ENCODE measurements at regions of chr15 and their contacts with region 1.

Region 1: DNA sequence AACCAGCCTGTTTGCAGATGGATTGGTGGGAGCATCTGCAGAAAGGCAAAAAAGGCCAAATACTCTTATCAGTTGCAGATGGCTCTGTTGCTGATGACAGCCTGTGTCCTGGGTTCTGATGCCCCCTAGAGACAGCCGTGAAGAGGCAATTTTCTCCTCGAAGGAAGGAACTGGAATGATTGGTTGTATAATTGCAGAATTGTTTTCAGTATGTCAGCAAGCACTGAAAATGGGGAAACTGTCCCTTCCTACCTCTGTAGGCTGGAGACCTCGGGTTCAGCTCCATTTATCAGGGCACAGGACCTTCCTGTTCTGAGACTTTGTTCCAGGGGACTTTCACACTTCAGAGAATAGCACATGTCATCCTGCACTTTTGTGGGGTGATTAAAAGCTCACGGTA is 103.0 kb downstream of the PGPEP1L start:
- DNase-seq: peak; percentile 85 to 89
- ATAC-seq: peak; percentile 77 to 79
- H3K4me3 ChIP-seq: no peak overlapping the region
- H3K27ac ChIP-seq: peak overlapping the region; percentile 94 to 97
- H3K4me1 ChIP-seq: peaks cover 85% of the 10 kb centered on the region
- CTCF ChIP-seq: peak; percentile 91
- EP300 ChIP-seq: no peak
- POLR2A ChIP-seq: no peak
- RAD21 ChIP-seq: peak; percentile 95 to 98

Region 2: GRCh38 chr15:98850961-98851573 is 53.5 kb before region 1 on chr15:
- CTCF ChIA-PET with region 1: interaction called, 26 read pairs
- POLR2A ChIA-PET with region 1: no interaction called
- DNase-seq: peak; percentile 84 to 89
- ATAC-seq: peak; percentile 65 to 76
- H3K4me3 ChIP-seq: peak overlapping the region; percentile 47; the same call in 2 of the 3 replicates
- H3K27ac ChIP-seq: peak overlapping the region; percentile 95 to 97
- H3K4me1 ChIP-seq: peaks cover 86% of the 10 kb centered on the region
- CTCF ChIP-seq: peak; percentile 88
- EP300 ChIP-seq: peak; percentile 25 to 27; a peak in 2 of 5 replicates
- POLR2A ChIP-seq: no peak
- RAD21 ChIP-seq: peak; percentile 98

Region 3: DNA sequence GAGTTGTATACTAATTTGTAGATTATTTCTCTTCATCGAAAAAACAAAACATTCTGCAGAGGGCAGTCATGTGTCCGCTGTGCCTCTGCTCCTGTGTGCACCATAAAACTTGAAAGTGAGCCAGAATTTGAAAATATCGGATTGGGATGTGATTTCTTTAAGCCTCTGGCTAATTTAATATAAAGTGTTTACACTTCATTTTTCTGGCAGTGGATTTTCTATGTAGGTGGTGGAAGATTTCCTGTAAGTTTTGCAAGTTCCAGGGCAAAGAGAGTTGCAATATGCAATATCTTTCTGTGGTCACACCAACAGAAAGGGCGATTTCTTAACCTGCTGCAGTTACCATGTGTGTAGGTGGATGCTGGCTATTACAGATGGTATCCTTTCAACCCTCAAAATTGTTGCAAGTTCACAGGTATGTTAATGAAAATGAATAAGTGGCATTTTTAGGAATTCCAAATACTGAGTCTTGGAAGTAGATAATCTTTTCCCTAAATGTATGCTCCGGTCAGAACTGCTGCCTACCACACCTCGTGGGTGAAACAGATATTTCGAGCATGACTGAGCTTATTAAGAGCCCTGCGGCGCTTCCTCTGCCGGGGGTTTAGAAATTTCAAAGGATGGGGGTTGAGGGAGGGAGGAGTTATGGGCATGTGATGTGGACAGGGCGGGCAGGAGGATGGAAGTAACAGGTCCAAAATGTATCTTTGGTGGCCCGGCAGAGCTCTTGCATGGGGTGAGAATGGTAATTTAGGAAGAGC is 30.9 kb before region 1 on chr15:
- CTCF ChIA-PET with region 1: interaction called, 33 read pairs
- POLR2A ChIA-PET with region 1: no interaction called
- DNase-seq: peak; percentile 97
- ATAC-seq: peak; percentile 86 to 89
- H3K4me3 ChIP-seq: peak overlapping the region; percentile 26
- H3K27ac ChIP-seq: peak overlapping the region; percentile 95 to 97
- H3K4me1 ChIP-seq: peaks cover 96% of the 10 kb centered on the region
- CTCF ChIP-seq: peak; percentile 43
- EP300 ChIP-seq: peak; percentile 96 to 99
- POLR2A ChIP-seq: no peak; the same call in 1 of the 2 replicates
- RAD21 ChIP-seq: peak; percentile 30 to 36

Region 4: DNA sequence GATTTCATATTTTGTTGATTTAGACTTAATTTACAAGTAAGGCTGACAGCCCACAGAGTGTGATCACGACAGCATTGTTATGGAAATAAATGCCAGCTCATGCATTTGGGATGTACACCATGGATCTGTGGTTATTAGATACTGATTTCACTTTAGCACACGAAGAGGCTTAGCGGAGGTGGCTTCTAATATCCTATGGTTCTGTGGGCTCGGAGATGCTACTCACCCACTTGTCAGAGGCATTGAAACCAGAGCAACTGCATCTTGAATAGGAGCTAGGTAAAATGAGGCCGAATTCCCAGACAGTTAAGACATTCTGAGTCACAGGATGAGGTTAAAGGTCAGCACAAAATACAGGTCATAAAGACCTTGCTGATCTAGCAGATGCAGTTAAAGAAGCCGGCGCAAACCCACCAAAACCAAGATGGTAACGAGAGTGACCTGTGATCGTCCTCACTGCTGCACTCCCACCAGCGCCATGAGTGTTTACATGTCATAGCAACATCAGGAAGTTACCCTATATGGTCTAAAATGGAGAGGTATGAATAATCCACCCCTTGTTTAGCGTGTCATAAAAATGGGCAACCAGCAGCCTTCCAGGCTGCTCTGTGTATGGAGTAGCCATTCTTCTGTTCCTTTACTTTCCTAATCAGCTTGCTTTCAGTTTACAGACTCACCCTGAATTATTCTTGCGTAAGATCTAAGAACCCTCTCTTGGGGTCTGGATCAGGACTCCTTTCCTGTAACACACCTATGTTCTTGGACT is 14.4 kb before region 1 on chr15:
- CTCF ChIA-PET with region 1: interaction called, 14 read pairs
- POLR2A ChIA-PET with region 1: no interaction called
- DNase-seq: peak in 1 of 2 experiments; percentile 88
- ATAC-seq: peak; percentile 67 to 75
- H3K4me3 ChIP-seq: no peak overlapping the region
- H3K27ac ChIP-seq: peak overlapping the region; percentile 95 to 97
- H3K4me1 ChIP-seq: peaks cover 97% of the 10 kb centered on the region
- CTCF ChIP-seq: no peak
- EP300 ChIP-seq: peak; percentile 43 to 64; a peak in 2 of 5 replicates
- POLR2A ChIP-seq: no peak
- RAD21 ChIP-seq: 0 out of 5 replicates have a peak, but pooled peaks of 1 of the 2 experiments have one; percentile 13

Region 5: DNA sequence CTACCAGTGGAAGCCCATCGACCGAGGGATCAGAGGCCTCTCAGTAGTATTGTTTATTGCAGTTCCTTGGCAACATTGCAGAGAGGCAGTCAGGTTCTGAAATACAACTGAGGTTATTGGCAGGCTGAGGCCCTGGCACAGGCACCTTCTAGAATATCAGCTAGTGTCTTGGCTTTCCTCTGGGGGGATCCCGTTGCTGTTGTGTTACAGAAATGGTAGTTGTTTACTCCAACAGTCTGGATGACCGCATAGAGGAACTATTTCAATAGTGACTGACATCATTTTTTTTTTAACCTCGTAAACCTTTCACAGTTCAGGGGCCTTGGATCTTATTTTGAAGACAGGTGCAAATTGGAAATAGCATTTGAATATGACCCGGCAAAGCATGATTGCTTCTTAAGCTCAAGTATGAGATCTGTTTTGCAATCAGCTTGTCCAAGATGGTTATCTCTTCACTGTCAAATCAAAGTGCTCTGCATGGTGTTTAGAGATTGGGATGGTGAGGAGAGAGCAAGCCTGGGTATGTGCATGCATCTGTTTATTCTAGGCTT is 39.1 kb after region 1 on chr15:
- CTCF ChIA-PET with region 1: interaction called, 10 read pairs
- POLR2A ChIA-PET with region 1: no interaction called
- DNase-seq: no peak
- ATAC-seq: no peak
- H3K4me3 ChIP-seq: no peak overlapping the region
- H3K27ac ChIP-seq: peak overlapping the region; percentile 55 to 69; a peak in 4 of 6 replicates
- H3K4me1 ChIP-seq: peaks cover 47% of the 10 kb centered on the region
- CTCF ChIP-seq: no peak
- EP300 ChIP-seq: no peak
- POLR2A ChIP-seq: no peak
- RAD21 ChIP-seq: no peak

Measured in A549 (cell line).